Ascending aorta (tissue), 2 donors: ENCODE measurements at regions of chr10 and their contacts with region 1.

Region 1: GRCh38 chr10:59079386-59080226 is 96.8 kb upstream of the PHYHIPL start:
- DNase-seq: no peak
- H3K4me3 ChIP-seq: no peak overlapping the region
- H3K27ac ChIP-seq: peak overlapping the region; percentile 82 to 86
- H3K4me1 ChIP-seq: peaks cover 8 to 48% of the 10 kb centered on the region in 2 donors
- H3K27me3 ChIP-seq: no peaks in the 10 kb centered on the region
- CTCF ChIP-seq: no peak

Region 2: GRCh38 chr10:58818900-58819299 is 260.7 kb before region 1 on chr10:
- intact Hi-C with region 1: no loop called
- DNase-seq: no peak
- H3K4me3 ChIP-seq: no peak overlapping the region
- H3K27ac ChIP-seq: no peak overlapping the region
- H3K4me1 ChIP-seq: peaks cover 0 to 7% of the 10 kb centered on the region in 2 donors
- H3K27me3 ChIP-seq: no peaks in the 10 kb centered on the region
- CTCF ChIP-seq: peak in 1 of 3 experiments; percentile 4

Region 3: GRCh38 chr10:58952747-58953466 is 126.7 kb before region 1 on chr10:
- intact Hi-C with region 1: loop called (anchors 5 kb)
- DNase-seq: peak in 1 of 2 donors; percentile 72
- H3K4me3 ChIP-seq: no peak overlapping the region
- H3K27ac ChIP-seq: peak overlapping the region in 1 of 2 donors; percentile 1
- H3K4me1 ChIP-seq: peaks cover 0 to 7% of the 10 kb centered on the region in 2 donors
- H3K27me3 ChIP-seq: no peaks in the 10 kb centered on the region
- CTCF ChIP-seq: peak; percentile 74 to 88 (median 84)

Region 4: DNA sequence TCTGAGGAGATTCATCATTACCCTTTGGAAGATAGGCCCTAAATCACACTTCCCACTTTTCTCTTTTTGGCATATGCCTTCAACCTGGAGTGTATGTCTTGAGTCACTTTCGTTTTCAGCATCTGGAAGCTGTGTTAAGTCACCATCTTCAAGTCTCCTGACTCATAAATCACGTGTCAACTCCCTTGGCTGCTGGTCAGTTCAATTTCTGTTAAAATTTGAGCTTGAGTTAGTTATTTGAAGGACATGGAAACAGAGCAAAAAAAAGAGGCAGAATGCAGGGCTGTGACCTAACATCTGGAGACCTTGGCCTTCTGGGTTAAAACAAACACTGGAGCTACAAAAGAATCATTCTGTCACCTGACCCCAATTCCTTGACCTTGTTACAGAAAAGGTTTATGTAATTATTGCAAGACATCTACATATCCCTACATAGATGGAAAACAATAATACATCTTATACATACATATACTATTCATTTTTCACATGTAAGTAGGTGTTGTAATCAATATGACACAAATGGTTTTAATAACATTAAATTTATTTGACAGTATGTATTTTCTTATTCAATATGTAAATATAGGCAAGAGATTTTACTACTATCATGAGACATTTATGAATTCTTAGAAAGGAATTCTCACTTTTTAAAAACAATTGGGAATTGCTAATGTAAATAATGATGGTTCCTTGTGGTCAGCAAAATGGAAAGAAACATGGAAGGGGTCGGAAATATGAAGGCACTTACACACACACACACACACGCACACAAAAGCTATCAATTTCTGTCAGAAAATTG is 72.9 kb before region 1 on chr10:
- intact Hi-C with region 1: loop called (anchors 2 kb)
- DNase-seq: peak in 1 of 2 donors; percentile 81
- H3K4me3 ChIP-seq: no peak overlapping the region
- H3K27ac ChIP-seq: peak overlapping the region; percentile 70 to 78
- H3K4me1 ChIP-seq: peaks cover 0 to 22% of the 10 kb centered on the region in 2 donors
- H3K27me3 ChIP-seq: no peaks in the 10 kb centered on the region
- CTCF ChIP-seq: no peak

Region 5: GRCh38 chr10:59337201-59337652 is 257.6 kb after region 1 on chr10:
- intact Hi-C with region 1: loop called (anchors 10 kb)
- DNase-seq: no peak
- H3K4me3 ChIP-seq: no peak overlapping the region
- H3K27ac ChIP-seq: peak overlapping the region; percentile 67 to 73
- H3K4me1 ChIP-seq: peaks cover 4 to 29% of the 10 kb centered on the region in 2 donors
- H3K27me3 ChIP-seq: no peaks in the 10 kb centered on the region
- CTCF ChIP-seq: no peak